Activated CD8-positive, alpha-beta T cell treated with anti-CD3 and anti-CD28 coated beads for 36 hours (primary cell): ENCODE measurements at regions of chr19 and their contacts with region 1.

Region 1: GRCh38 chr19:2561895-2562294 is 86.0 kb downstream of the GADD45B start:
- DNase-seq: peak; percentile 97
- ATAC-seq: peak; percentile 95
- H3K4me3 Mint-ChIP-seq: peak overlapping the region; percentile 74
- H3K27ac Mint-ChIP-seq: peak overlapping the region; percentile 86
- H3K4me1 Mint-ChIP-seq: peaks cover 27% of the 10 kb centered on the region
- H3K27me3 Mint-ChIP-seq: no peaks in the 10 kb centered on the region
- CTCF ChIP-seq: no peak

Region 2: GRCh38 chr19:2627319-2627829 is 65.5 kb after region 1 on chr19:
- CTCF ChIA-PET with region 1: no interaction called
- POLR2A ChIA-PET with region 1: interaction called, 10 read pairs
- intact Hi-C with region 1: no loop called
- DNase-seq: peak; percentile 65
- ATAC-seq: peak; percentile 77
- H3K4me3 Mint-ChIP-seq: no peak overlapping the region
- H3K27ac Mint-ChIP-seq: peak overlapping the region; percentile 78
- H3K4me1 Mint-ChIP-seq: peaks cover 33% of the 10 kb centered on the region
- H3K27me3 Mint-ChIP-seq: no peaks in the 10 kb centered on the region
- CTCF ChIP-seq: no peak